Gastrocnemius medialis (tissue), 4 donors: ENCODE measurements at regions of chr3 and their contacts with region 1.

Region 1: GRCh38 chr3:113495035-113495434 is 19.9 kb downstream of the SPICE1 start:
- DNase-seq: peak in 1 of 2 donors; percentile 21
- ATAC-seq: peak; percentile 55 to 60
- H3K4me3 ChIP-seq: no peak overlapping the region
- H3K27ac ChIP-seq: peak overlapping the region in 1 of 4 donors; percentile 11
- H3K4me1 ChIP-seq: no peaks in the 10 kb centered on the region
- H3K27me3 ChIP-seq: no peaks in the 10 kb centered on the region
- CTCF ChIP-seq: peak in 4 of 5 experiments; percentile 4 to 52 (median 42)
- POLR2A ChIP-seq: no peak

Region 2: DNA sequence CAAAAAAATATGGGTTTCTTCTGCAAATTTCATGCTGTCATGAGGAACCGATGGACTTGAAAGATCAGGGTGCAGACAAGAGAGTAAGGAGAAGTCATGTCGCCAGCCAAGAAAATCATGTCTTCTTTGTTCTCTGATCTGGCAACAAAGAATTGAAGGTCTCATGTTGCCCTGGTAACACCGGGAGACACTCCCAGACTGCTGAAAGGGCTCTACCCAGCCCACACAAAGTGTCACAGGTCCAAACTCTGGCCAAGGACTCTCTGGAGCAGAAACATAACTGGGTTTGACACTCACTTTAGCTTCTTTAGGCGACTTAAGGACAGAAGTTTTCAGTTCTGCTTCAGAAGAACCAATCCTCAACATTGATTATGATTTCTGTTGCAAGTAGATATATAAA is 80.2 kb after region 1 on chr3:
- in situ Hi-C with region 1: no loop called
- intact Hi-C with region 1: loop called (anchors 2 kb)
- DNase-seq: no peak
- ATAC-seq: no peak
- H3K4me3 ChIP-seq: no peak overlapping the region
- H3K27ac ChIP-seq: no peak overlapping the region
- H3K4me1 ChIP-seq: no peaks in the 10 kb centered on the region
- H3K27me3 ChIP-seq: no peaks in the 10 kb centered on the region
- CTCF ChIP-seq: no peak
- POLR2A ChIP-seq: no peak